Naive thymus-derived CD4-positive, alpha-beta T cell (primary cell): ENCODE measurements at regions of chr12 and their contacts with region 1.

Region 1: GRCh38 chr12:95072900-95073697 is at the start of gene NR2C1:
- DNase-seq: peak; percentile 76 to 95 (median 92)
- ATAC-seq: peak; percentile 98
- H3K4me3 ChIP-seq: peak within 1 kb of the TSS; percentile 81
- H3K4me3 Mint-ChIP-seq: peak within 1 kb of the TSS; percentile 92 to 98 (median 94)
- H3K27ac ChIP-seq: peak within 1 kb of the TSS; percentile 81
- H3K27ac Mint-ChIP-seq: peak within 1 kb of the TSS; percentile 84 to 96 (median 93)
- H3K4me1 ChIP-seq: peaks cover 0 to 9% of the 10 kb centered on the region in 2 donors
- H3K4me1 Mint-ChIP-seq: peaks cover 8 to 40% (median 30%) of the 10 kb centered on the region in 7 donors
- H3K27me3 ChIP-seq: no peaks in the 10 kb centered on the region
- H3K27me3 Mint-ChIP-seq: peaks cover 0 to 5% (median 0%) of the 10 kb centered on the region in 5 donors
- total RNA-seq, gene NR2C1: 30.5 to 66.8 (median 58.7) TPM

Region 2: DNA sequence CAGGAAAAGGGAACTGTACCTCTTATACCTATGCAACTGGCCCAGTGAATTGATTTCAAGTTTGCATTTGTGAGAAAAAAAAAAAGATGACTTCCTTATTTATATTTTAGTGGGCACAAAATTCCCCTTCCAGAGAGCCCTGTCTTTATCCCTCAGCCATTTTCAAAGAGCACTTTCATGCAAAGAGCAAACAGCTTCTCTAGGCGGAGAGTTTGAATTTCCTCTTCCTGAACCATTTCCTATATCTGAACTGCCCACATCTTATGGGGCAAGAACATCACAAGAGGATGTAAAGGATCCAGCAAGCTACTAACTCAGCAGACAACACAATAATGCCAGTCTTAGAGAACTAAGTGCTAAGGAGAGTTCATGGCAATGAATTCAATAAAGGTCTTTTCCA is 947.0 kb before region 1 on chr12:
- CTCF ChIA-PET with region 1: no interaction called
- POLR2A ChIA-PET with region 1: no interaction called
- intact Hi-C with region 1: loop called in 1 of 2 experiments (anchors 1 kb)
- DNase-seq: no peak
- ATAC-seq: peak; percentile 58
- H3K4me3 ChIP-seq: no peak overlapping the region
- H3K4me3 Mint-ChIP-seq: peak overlapping the region; percentile 0 to 92 (median 56)
- H3K27ac ChIP-seq: no peak overlapping the region
- H3K27ac Mint-ChIP-seq: peak overlapping the region; percentile 53 to 90 (median 70)
- H3K4me1 ChIP-seq: peaks cover 16 to 50% of the 10 kb centered on the region in 2 donors
- H3K4me1 Mint-ChIP-seq: peaks cover 46 to 62% (median 59%) of the 10 kb centered on the region in 7 donors
- H3K27me3 ChIP-seq: no peaks in the 10 kb centered on the region
- H3K27me3 Mint-ChIP-seq: peaks cover 0 to 10% (median 0%) of the 10 kb centered on the region in 5 donors

Region 3: GRCh38 chr12:94922561-94922960 is 150.5 kb before region 1 on chr12:
- CTCF ChIA-PET with region 1: no interaction called
- POLR2A ChIA-PET with region 1: no interaction called
- intact Hi-C with region 1: loop called in 1 of 2 experiments (anchors 5 kb)
- DNase-seq: no peak
- ATAC-seq: no peak
- H3K4me3 ChIP-seq: no peak overlapping the region
- H3K4me3 Mint-ChIP-seq: no peak overlapping the region
- H3K27ac ChIP-seq: no peak overlapping the region
- H3K27ac Mint-ChIP-seq: peak overlapping the region in 1 of 9 donors; percentile 58
- H3K4me1 ChIP-seq: no peaks in the 10 kb centered on the region
- H3K4me1 Mint-ChIP-seq: no peaks in the 10 kb centered on the region
- H3K27me3 ChIP-seq: no peaks in the 10 kb centered on the region
- H3K27me3 Mint-ChIP-seq: no peaks in the 10 kb centered on the region

Region 4: GRCh38 chr12:94987801-94988200 is 85.3 kb before region 1 on chr12:
- CTCF ChIA-PET with region 1: interaction called, 7 read pairs
- POLR2A ChIA-PET with region 1: no interaction called
- intact Hi-C with region 1: loop called in 1 of 2 experiments (anchors 1 kb)
- DNase-seq: peak in 7 of 9 donors; percentile 58 to 75 (median 73)
- ATAC-seq: peak; percentile 72
- H3K4me3 ChIP-seq: no peak overlapping the region
- H3K4me3 Mint-ChIP-seq: peak overlapping the region; percentile 42 to 90 (median 64)
- H3K27ac ChIP-seq: peak overlapping the region; percentile 52
- H3K27ac Mint-ChIP-seq: peak overlapping the region; percentile 50 to 99 (median 97)
- H3K4me1 ChIP-seq: peaks cover 25 to 61% of the 10 kb centered on the region in 2 donors
- H3K4me1 Mint-ChIP-seq: peaks cover 40 to 95% (median 77%) of the 10 kb centered on the region in 7 donors
- H3K27me3 ChIP-seq: no peaks in the 10 kb centered on the region
- H3K27me3 Mint-ChIP-seq: no peaks in the 10 kb centered on the region

Region 5: GRCh38 chr12:95259368-95259767 is 186.3 kb after region 1 on chr12:
- CTCF ChIA-PET with region 1: no interaction called
- POLR2A ChIA-PET with region 1: no interaction called
- intact Hi-C with region 1: no loop called
- DNase-seq: no peak
- ATAC-seq: no peak
- H3K4me3 ChIP-seq: no peak overlapping the region
- H3K4me3 Mint-ChIP-seq: no peak overlapping the region
- H3K27ac ChIP-seq: no peak overlapping the region
- H3K27ac Mint-ChIP-seq: no peak overlapping the region
- H3K4me1 ChIP-seq: no peaks in the 10 kb centered on the region
- H3K4me1 Mint-ChIP-seq: peaks cover 0 to 13% (median 0%) of the 10 kb centered on the region in 7 donors
- H3K27me3 ChIP-seq: no peaks in the 10 kb centered on the region
- H3K27me3 Mint-ChIP-seq: no peaks in the 10 kb centered on the region

Region 6: DNA sequence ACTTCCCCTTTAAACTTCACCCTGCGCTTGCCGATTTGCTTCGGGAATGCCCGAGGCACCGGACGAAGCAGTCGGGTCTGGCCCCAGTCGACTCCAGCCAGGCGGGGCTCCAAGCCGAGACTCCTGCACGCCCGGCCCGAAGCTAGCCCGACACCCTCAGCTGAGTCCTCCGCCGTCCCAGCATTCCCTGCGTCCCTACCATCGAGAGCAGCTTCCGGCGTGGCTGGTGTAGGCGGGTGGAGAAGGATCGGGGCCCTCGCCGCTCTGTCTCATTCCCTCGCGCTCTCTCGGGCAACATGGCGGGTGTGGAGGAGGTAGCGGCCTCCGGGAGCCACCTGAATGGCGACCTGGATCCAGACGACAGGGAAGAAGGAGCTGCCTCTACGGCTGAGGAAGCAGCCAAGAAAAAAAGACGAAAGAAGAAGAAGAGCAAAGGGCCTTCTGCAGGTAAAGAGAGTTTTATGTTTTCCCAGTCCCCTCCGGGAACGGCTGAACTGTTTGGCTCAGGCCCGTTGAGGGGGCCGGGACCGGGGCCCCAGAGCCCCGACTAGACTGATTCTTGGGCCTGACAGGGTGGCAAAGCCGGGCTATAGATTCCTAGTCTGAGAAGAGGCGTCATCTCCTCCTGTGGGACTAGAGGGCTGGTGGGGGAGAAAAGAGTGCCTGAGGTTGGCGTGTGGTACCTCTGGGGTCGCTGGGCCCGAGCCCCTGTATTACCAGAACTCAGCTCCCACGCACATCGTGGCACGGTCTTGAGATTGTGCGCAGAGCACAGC is 401.0 kb after region 1 on chr12 and contains the start of gene METAP2:
- CTCF ChIA-PET with region 1: interaction called, 3 read pairs
- POLR2A ChIA-PET with region 1: interaction called, 23 read pairs
- intact Hi-C with region 1: loop called (anchors 1 kb)
- DNase-seq: peak; percentile 75 to 93 (median 87)
- ATAC-seq: peak; percentile 98
- H3K4me3 ChIP-seq: peak within 1 kb of the TSS; percentile 81
- H3K4me3 Mint-ChIP-seq: peak within 1 kb of the TSS; percentile 96 to 100 (median 99)
- H3K27ac ChIP-seq: peak within 1 kb of the TSS; percentile 92
- H3K27ac Mint-ChIP-seq: peak within 1 kb of the TSS; percentile 95 to 100 (median 99)
- H3K4me1 ChIP-seq: peaks cover 10 to 39% of the 10 kb centered on the region in 2 donors
- H3K4me1 Mint-ChIP-seq: peaks cover 31 to 70% (median 55%) of the 10 kb centered on the region in 7 donors
- H3K27me3 ChIP-seq: no peaks in the 10 kb centered on the region
- H3K27me3 Mint-ChIP-seq: no peaks in the 10 kb centered on the region
- total RNA-seq, gene METAP2: 48.2 to 79.9 (median 57.3) TPM

Region 7: DNA sequence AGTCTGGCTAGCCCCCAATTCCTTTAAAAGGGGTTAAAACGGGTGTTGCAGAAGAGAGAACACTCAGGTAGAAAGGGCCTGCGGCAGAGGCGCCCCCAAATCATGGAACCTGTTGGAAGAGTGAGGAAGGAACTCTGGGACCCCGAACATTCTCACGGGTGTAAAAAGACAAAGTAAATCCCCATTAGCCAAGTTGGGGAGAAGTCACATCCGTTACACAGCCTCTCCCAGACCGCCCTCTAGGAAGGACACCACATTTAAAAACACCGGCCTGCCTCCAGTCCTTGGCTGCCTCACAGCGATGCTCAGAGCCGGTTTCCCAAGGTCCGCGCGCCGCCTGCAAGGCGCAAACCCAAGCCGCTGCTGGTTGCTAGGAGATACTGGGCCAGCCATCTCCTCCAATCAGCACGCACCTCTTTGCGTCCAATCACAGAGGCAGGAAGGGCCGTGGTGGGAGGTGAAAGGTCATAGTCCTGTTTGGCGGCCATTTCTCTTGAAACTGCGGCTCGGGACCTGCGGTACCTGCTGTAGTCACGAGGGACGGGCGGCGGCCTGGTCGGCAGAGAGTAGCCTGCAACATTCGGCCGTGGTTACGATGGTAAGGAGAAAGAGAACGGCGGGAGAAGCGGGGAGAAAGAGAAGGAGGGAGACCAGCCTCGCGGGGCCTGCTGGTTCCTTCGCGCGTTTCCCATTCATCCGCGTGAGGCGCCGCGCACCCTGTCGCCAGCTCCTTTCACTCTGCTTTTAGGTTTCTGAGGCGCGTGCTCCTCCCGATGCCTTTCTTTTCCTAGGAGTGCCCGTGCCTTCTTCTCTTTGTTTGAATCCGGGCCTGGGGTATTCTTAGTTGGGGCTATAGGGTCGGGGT is 785.6 kb after region 1 on chr12 and contains the start of gene SNRPF:
- CTCF ChIA-PET with region 1: interaction called, 6 read pairs
- POLR2A ChIA-PET with region 1: no interaction called
- intact Hi-C with region 1: loop called (anchors 1 to 2 kb)
- DNase-seq: peak; percentile 88 to 96 (median 92)
- ATAC-seq: peak; percentile 98
- H3K4me3 ChIP-seq: peak within 1 kb of the TSS; percentile 82
- H3K4me3 Mint-ChIP-seq: no peak within 1 kb of the TSS
- H3K27ac ChIP-seq: peak within 1 kb of the TSS; percentile 86
- H3K27ac Mint-ChIP-seq: no peak within 1 kb of the TSS
- H3K4me1 ChIP-seq: peaks cover 11 to 12% of the 10 kb centered on the region in 2 donors
- H3K4me1 Mint-ChIP-seq: peaks cover 13 to 27% (median 16%) of the 10 kb centered on the region in 7 donors
- H3K27me3 ChIP-seq: no peaks in the 10 kb centered on the region
- H3K27me3 Mint-ChIP-seq: peaks cover 3 to 11% (median 7%) of the 10 kb centered on the region in 5 donors
- total RNA-seq, gene SNRPF: 19.0 to 40.4 (median 21.7) TPM

Region 8: DNA sequence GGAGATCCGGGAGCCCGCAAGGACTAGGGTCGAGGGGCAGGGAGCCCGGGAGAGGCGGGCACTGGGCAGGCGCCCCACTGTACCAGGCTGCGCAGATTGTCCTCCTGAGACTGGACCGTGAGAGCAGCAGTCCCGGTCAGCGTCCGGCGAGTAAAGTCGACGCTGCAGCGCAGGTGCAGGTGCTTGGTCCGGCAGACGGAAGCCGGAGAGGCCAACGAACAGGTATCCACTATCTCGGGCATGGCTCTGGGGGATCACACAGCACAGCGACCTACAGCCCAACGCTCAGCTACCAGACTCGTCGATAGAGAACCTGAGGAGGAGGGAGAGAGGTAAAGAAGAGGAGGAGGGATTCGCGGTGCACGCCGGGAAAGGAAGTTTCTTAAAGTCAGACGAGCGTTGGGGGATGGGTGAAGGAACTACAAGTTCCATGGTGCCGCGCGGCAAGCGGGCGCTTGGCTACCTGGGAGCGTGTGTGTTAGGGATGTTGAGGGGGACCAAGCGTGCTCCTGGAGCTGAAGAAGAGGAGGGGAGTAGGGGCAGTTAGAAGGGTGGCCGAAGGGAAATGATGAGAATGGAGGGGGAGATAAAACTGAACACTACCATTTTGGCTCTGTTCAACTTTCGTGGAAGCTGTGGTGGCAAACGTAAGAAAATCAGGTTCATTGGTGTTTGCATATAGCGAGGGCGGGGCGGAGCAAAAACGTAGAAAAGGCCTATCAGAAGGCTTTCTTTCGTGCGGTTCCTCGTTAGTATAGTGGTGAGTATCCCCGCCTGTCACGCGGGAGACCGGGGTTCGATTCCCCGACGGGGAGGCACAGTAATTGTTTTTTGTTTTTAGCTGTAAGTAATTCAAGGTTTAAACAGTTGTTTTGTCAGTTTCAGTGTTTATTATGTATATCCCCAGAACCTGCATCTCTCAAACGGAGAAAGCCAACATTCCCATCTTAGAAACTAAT is 962.5 kb after region 1 on chr12 and contains the start of gene LTA4H:
- CTCF ChIA-PET with region 1: no interaction called
- POLR2A ChIA-PET with region 1: no interaction called
- intact Hi-C with region 1: loop called in 1 of 2 experiments (anchors 1 kb)
- DNase-seq: peak; percentile 86 to 99 (median 97)
- ATAC-seq: peak; percentile 97
- H3K4me3 ChIP-seq: peak within 1 kb of the TSS; percentile 85
- H3K4me3 Mint-ChIP-seq: no peak within 1 kb of the TSS
- H3K27ac ChIP-seq: peak within 1 kb of the TSS; percentile 81
- H3K27ac Mint-ChIP-seq: no peak within 1 kb of the TSS
- H3K4me1 ChIP-seq: peaks cover 4 to 9% of the 10 kb centered on the region in 2 donors
- H3K4me1 Mint-ChIP-seq: peaks cover 5 to 19% (median 17%) of the 10 kb centered on the region in 7 donors
- H3K27me3 ChIP-seq: no peaks in the 10 kb centered on the region
- H3K27me3 Mint-ChIP-seq: no peaks in the 10 kb centered on the region
- total RNA-seq, gene LTA4H: 52.5 to 151 (median 63.4) TPM